Ascending aorta (tissue), 2 donors: ENCODE measurements at regions of chr7 and their contacts with region 1.

Region 1: DNA sequence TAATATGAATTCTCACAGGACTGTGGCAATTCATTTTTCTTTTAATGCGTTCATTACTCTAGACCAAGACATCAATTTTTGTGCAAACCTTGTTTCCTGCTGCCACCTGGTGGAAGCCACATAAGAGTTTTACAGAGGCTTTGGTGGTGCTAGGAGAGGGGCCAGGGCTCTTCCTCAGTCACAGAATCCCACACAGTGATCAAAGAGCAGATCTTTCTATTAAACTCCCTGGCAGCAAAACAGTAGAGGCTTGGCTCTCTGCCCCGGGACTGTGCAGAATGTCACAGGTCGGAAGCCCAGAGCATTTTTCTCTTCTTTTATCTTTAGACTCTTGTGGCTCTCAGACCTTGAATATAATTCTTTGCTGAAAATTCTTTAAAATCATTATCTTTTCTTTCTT is 506.4 kb upstream of the C7orf33 start:
- DNase-seq: no peak
- H3K4me3 ChIP-seq: no peak overlapping the region
- H3K27ac ChIP-seq: no peak overlapping the region
- H3K4me1 ChIP-seq: no peaks in the 10 kb centered on the region
- H3K27me3 ChIP-seq: no peaks in the 10 kb centered on the region
- CTCF ChIP-seq: peak in 2 of 3 experiments; percentile 27 to 63

Region 2: DNA sequence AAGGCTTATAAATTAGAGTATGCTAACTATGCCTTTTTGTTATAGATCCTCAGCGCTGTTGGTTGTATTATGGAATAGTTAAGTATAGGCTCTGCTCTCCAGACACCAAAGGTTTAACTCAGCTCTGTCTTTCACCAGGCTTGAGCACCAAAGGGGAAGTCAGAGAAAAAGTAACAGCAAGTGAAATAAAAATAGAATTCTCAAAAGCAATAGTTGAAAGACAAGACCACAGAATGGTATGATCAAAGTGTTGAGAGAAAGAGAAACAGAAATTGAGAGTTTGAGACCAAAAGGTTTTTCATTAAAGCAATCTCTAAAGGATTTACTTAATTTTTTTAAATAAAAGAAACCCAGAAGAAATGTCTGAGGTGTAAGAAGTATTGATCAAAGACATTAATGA is 23.4 kb before region 1 on chr7:
- intact Hi-C with region 1: loop called (anchors 2 kb)
- DNase-seq: no peak
- H3K4me3 ChIP-seq: no peak overlapping the region
- H3K27ac ChIP-seq: no peak overlapping the region
- H3K4me1 ChIP-seq: no peaks in the 10 kb centered on the region
- H3K27me3 ChIP-seq: no peaks in the 10 kb centered on the region
- CTCF ChIP-seq: no peak

Region 3: DNA sequence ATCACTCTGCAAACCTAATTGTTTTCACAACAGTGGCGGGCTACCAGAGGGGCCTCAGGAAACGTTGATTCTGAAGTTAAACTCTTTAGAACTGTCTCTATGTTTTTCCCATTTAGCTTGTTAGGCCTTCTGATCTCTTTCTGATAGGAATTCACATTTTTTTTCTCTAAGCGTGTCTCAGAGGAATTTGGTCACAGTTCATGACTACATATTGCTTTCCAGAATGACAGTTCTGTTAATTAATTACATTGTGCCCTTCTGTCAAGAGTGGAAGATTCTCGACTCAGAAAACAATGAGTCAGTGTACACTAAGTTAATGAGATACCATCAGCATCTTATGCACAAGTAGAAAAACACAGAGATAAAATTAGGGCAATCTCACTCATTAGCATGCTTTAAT is 37.3 kb after region 1 on chr7:
- intact Hi-C with region 1: no loop called
- DNase-seq: no peak
- H3K4me3 ChIP-seq: no peak overlapping the region
- H3K27ac ChIP-seq: no peak overlapping the region
- H3K4me1 ChIP-seq: no peaks in the 10 kb centered on the region
- H3K27me3 ChIP-seq: no peaks in the 10 kb centered on the region
- CTCF ChIP-seq: no peak

Region 4: GRCh38 chr7:148340881-148341280 is 256.7 kb after region 1 on chr7:
- intact Hi-C with region 1: no loop called
- DNase-seq: no peak
- H3K4me3 ChIP-seq: no peak overlapping the region
- H3K27ac ChIP-seq: no peak overlapping the region
- H3K4me1 ChIP-seq: no peaks in the 10 kb centered on the region
- H3K27me3 ChIP-seq: no peaks in the 10 kb centered on the region
- CTCF ChIP-seq: no peak